Caco-2 (cell line): ENCODE measurements at regions of chr5 and their contacts with region 1.

Region 1: GRCh38 chr5:124439609-124440008 is 306.8 kb downstream of the ZNF608 start:
- DNase-seq: no peak
- H3K4me3 ChIP-seq: no peak overlapping the region
- H3K4me3 Mint-ChIP-seq: no peak overlapping the region
- H3K27ac Mint-ChIP-seq: no peak overlapping the region
- H3K4me1 ChIP-seq: no peaks in the 10 kb centered on the region
- H3K4me1 Mint-ChIP-seq: no peaks in the 10 kb centered on the region
- H3K27me3 ChIP-seq: no peaks in the 10 kb centered on the region
- H3K27me3 Mint-ChIP-seq: no peaks in the 10 kb centered on the region
- CTCF ChIP-seq: no peak

Region 2: GRCh38 chr5:124263680-124264483 is 175.7 kb before region 1 on chr5:
- CTCF ChIA-PET with region 1: no interaction called
- POLR2A ChIA-PET with region 1: no interaction called
- intact Hi-C with region 1: no loop called
- DNase-seq: no peak
- H3K4me3 ChIP-seq: no peak overlapping the region
- H3K4me3 Mint-ChIP-seq: no peak overlapping the region
- H3K27ac Mint-ChIP-seq: no peak overlapping the region
- H3K4me1 ChIP-seq: peaks cover 14% of the 10 kb centered on the region
- H3K4me1 Mint-ChIP-seq: no peaks in the 10 kb centered on the region
- H3K27me3 ChIP-seq: no peaks in the 10 kb centered on the region
- H3K27me3 Mint-ChIP-seq: no peaks in the 10 kb centered on the region
- CTCF ChIP-seq: no peak

Region 3: GRCh38 chr5:124725040-124725434 is 285.4 kb after region 1 on chr5:
- CTCF ChIA-PET with region 1: no interaction called
- POLR2A ChIA-PET with region 1: interaction called, 10 read pairs
- intact Hi-C with region 1: no loop called
- DNase-seq: peak in 1 of 2 experiments; percentile 27
- H3K4me3 ChIP-seq: no peak overlapping the region
- H3K4me3 Mint-ChIP-seq: peak overlapping the region; percentile 15
- H3K27ac Mint-ChIP-seq: peak overlapping the region; percentile 5
- H3K4me1 ChIP-seq: peaks cover 37% of the 10 kb centered on the region
- H3K4me1 Mint-ChIP-seq: peaks cover 29% of the 10 kb centered on the region
- H3K27me3 ChIP-seq: no peaks in the 10 kb centered on the region
- H3K27me3 Mint-ChIP-seq: no peaks in the 10 kb centered on the region
- CTCF ChIP-seq: no peak